Activated CD4-positive, alpha-beta T cell treated with anti-CD3 and anti-CD28 coated beads, Interleukin-2, amount 10 ng/mL, durations not matched to agents 24 days and 14 days (primary cell): ENCODE measurements at regions of chr2 and their contacts with region 1.

Region 1: GRCh38 chr2:181178823-181179412 is 198.5 kb downstream of the UBE2E3 start:
- DNase-seq: peak; percentile 75
- H3K4me3 Mint-ChIP-seq: peak overlapping the region; percentile 30
- H3K27ac Mint-ChIP-seq: peak overlapping the region; percentile 86
- H3K4me1 Mint-ChIP-seq: peaks cover 40% of the 10 kb centered on the region
- H3K27me3 Mint-ChIP-seq: no peaks in the 10 kb centered on the region

Region 2: GRCh38 chr2:181021199-181021789 is 157.6 kb before region 1 on chr2:
- intact Hi-C with region 1: no loop called
- DNase-seq: no peak
- H3K4me3 Mint-ChIP-seq: no peak overlapping the region
- H3K27ac Mint-ChIP-seq: no peak overlapping the region
- H3K4me1 Mint-ChIP-seq: peaks cover 6% of the 10 kb centered on the region
- H3K27me3 Mint-ChIP-seq: no peaks in the 10 kb centered on the region

Region 3: DNA sequence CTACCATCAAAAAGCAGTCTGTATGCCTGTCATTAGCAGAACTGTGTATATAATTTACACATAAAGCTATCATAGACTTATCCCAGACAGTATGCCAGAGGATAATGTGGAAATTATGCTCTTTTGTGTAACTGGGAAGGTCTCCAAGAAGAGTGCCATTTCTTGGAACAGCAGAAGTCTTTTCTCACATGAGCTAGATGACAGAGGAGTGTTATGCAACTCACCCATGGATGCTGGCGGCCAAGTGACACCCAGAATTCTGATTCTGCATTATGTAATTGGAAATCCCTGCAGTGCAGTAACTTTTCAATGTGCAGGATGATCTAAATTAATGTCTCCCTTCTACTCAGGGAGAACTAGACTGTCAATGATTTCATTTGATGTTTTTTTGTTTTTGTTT is 38.5 kb before region 1 on chr2:
- intact Hi-C with region 1: loop called (anchors 5 kb)
- DNase-seq: no peak
- H3K4me3 Mint-ChIP-seq: peak overlapping the region; percentile 79
- H3K27ac Mint-ChIP-seq: peak overlapping the region; percentile 80
- H3K4me1 Mint-ChIP-seq: peaks cover 56% of the 10 kb centered on the region
- H3K27me3 Mint-ChIP-seq: no peaks in the 10 kb centered on the region

Region 4: GRCh38 chr2:181165199-181165868 is 13.6 kb before region 1 on chr2:
- intact Hi-C with region 1: loop called (anchors 1 kb)
- DNase-seq: peak; percentile 81
- H3K4me3 Mint-ChIP-seq: peak overlapping the region; percentile 58
- H3K27ac Mint-ChIP-seq: peak overlapping the region; percentile 93
- H3K4me1 Mint-ChIP-seq: peaks cover 36% of the 10 kb centered on the region
- H3K27me3 Mint-ChIP-seq: no peaks in the 10 kb centered on the region

Region 5: DNA sequence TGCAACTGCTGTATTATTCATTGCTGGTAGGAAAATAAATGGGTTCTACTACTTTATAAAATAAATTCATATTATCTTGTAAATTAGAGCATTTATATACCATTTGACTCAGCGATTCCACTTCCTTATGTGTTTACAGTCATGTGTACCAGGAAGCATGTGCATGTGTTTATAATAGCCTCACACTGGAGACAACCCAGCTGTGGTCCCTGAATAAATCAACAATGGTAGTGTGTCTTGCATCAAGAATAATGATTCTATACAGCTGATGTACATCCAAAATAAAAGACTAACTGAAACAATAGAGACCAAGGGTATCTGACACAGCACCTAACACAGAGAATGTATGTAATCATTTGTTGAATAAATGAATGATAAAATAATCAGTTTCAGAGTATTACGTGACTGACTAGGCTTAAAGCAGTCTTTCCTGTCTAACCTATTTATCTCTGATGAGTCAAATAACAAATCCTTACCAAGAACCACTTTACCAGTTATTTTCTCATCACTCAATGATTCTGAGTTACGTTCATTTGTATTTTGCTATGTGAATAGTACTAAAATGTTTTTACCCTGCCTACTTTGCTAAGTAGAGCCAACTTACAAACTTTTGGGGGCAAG is 18.3 kb after region 1 on chr2:
- intact Hi-C with region 1: loop called (anchors 1 kb)
- DNase-seq: peak; percentile 57
- H3K4me3 Mint-ChIP-seq: peak overlapping the region; percentile 48
- H3K27ac Mint-ChIP-seq: peak overlapping the region; percentile 88
- H3K4me1 Mint-ChIP-seq: peaks cover 45% of the 10 kb centered on the region
- H3K27me3 Mint-ChIP-seq: no peaks in the 10 kb centered on the region

Region 6: GRCh38 chr2:181223234-181223633 is 44.3 kb after region 1 on chr2:
- intact Hi-C with region 1: loop called (anchors 5 kb)
- DNase-seq: peak; percentile 59
- H3K4me3 Mint-ChIP-seq: peak overlapping the region; percentile 71
- H3K27ac Mint-ChIP-seq: peak overlapping the region; percentile 96
- H3K4me1 Mint-ChIP-seq: peaks cover 29% of the 10 kb centered on the region
- H3K27me3 Mint-ChIP-seq: no peaks in the 10 kb centered on the region

Region 7: GRCh38 chr2:181466661-181467576 is 288.0 kb after region 1 on chr2:
- intact Hi-C with region 1: no loop called
- DNase-seq: peak; percentile 92
- H3K4me3 Mint-ChIP-seq: peak overlapping the region; percentile 32
- H3K27ac Mint-ChIP-seq: peak overlapping the region; percentile 71
- H3K4me1 Mint-ChIP-seq: peaks cover 72% of the 10 kb centered on the region
- H3K27me3 Mint-ChIP-seq: no peaks in the 10 kb centered on the region